ENCODE measurements at regions of chr1 and their contacts with region 1.

Region 1: DNA sequence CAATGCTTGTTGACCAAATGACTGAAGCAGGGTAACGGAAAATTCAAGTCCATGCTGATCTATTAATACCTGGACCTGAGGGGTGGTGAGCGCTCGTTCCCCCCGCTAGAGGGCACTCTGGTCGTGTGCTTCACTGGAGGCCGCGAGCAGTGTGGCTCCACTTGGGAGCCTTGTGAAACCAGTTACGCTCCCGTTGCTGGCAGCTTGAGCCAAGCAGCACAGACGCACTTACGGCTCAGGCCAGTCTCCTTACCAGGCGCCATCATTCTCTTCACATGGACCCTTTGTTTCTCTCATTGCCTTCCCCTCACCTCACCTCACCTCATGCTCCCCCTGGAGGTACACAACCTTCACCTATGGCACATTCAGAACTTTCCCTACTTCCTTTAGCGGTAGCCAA is 49.7 kb upstream of the TSPAN2 start:
- DNase-seq: peak; percentile 51
- H3K4me3 ChIP-seq: no peak overlapping the region
- H3K27me3 ChIP-seq: no peaks in the 10 kb centered on the region
- CTCF ChIP-seq: peak; percentile 92

Region 2: GRCh38 chr1:115041654-115042053 is 97.3 kb before region 1 on chr1:
- CTCF ChIA-PET with region 1: no interaction called
- POLR2A ChIA-PET with region 1: no interaction called
- DNase-seq: no peak
- H3K4me3 ChIP-seq: no peak overlapping the region
- H3K27me3 ChIP-seq: no peaks in the 10 kb centered on the region; the same call in 1 of the 2 replicates
- CTCF ChIP-seq: peak; percentile 23; the same call in 1 of the 2 replicates

Region 3: DNA sequence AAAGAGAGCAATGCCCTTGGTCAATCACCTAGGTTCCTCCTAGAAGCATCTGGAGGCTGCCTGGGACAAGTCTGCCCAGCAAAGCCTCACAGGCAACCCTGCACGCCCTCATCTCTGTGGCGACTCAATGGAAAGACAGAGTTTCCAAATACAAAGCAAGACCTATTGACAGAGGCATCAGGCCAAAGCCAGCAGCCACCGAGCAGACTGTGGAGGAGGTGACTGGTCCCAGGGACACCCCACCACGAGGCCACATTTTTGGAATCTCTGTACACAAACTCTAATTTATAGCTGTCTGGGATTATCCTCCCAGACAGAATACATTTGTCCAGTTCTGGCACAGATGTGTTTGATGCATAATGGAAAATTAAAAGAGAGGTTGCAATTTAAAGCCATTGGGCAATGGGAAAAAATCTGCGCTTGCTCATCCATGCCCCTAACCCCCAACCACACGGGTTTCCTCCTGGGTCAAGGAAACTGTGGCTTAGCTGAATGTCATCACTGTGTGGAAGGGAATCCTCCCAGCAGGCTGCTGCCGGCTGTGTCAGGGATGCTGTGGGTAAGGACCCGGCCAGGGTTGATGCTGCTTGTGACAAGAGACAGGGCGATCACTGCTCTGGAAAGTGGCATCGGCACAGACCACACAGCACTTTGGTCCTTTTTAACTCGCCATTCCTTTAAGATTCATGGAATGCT is 64.0 kb before region 1 on chr1:
- CTCF ChIA-PET with region 1: no interaction called
- POLR2A ChIA-PET with region 1: no interaction called
- DNase-seq: no peak
- H3K4me3 ChIP-seq: no peak overlapping the region
- H3K27me3 ChIP-seq: 0 out of 2 replicates have a peak, but pooled peaks cover 4% of the 10 kb centered on the region
- CTCF ChIP-seq: no peak

Region 4: GRCh38 chr1:115179397-115179835 is 40.4 kb after region 1 on chr1:
- CTCF ChIA-PET with region 1: interaction called, 16 read pairs
- POLR2A ChIA-PET with region 1: no interaction called
- DNase-seq: peak; percentile 92
- H3K4me3 ChIP-seq: no peak overlapping the region
- H3K27me3 ChIP-seq: no peaks in the 10 kb centered on the region
- CTCF ChIP-seq: no peak

Region 5: GRCh38 chr1:115302390-115302961 is 163.5 kb after region 1 on chr1:
- CTCF ChIA-PET with region 1: interaction called, 24 read pairs
- POLR2A ChIA-PET with region 1: interaction called, 4 read pairs
- DNase-seq: peak; percentile 91
- H3K4me3 ChIP-seq: no peak overlapping the region
- H3K27me3 ChIP-seq: no peaks in the 10 kb centered on the region
- CTCF ChIP-seq: no peak

Region 6: DNA sequence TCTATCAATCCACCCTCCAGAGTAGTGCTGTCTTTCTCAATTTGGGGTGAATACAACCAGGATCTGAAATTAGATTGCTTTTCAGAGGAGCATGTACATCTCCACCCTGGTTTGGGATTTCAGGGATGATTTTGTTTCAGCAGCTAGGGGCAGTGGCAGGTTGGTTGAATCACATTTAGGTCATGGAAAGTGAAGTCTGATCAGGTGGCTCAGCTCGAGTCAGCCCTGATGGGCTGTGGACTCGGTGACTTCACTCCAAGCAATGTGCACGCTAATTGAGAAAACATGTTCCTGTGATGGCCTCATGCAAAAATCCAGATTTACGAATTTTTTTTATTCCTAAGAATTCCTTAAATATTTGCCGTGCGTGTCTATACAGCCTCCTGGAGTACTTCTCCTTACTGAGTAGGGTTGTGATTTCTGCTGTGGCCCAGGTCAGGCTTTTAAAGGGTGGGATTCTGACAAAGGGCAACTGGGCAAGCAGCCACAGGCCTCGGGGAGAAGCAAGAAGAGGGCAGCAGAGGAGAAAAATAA is 191.6 kb after region 1 on chr1:
- CTCF ChIA-PET with region 1: interaction called, 11 read pairs
- POLR2A ChIA-PET with region 1: no interaction called
- DNase-seq: peak; percentile 95
- H3K4me3 ChIP-seq: no peak overlapping the region
- H3K27me3 ChIP-seq: no peaks in the 10 kb centered on the region
- CTCF ChIP-seq: peak; percentile 53

Region 7: GRCh38 chr1:115456441-115456961 is 317.5 kb after region 1 on chr1:
- CTCF ChIA-PET with region 1: interaction called, 10 read pairs
- POLR2A ChIA-PET with region 1: no interaction called
- DNase-seq: peak; percentile 30
- H3K4me3 ChIP-seq: no peak overlapping the region
- H3K27me3 ChIP-seq: no peaks in the 10 kb centered on the region
- CTCF ChIP-seq: no peak

Region 8: DNA sequence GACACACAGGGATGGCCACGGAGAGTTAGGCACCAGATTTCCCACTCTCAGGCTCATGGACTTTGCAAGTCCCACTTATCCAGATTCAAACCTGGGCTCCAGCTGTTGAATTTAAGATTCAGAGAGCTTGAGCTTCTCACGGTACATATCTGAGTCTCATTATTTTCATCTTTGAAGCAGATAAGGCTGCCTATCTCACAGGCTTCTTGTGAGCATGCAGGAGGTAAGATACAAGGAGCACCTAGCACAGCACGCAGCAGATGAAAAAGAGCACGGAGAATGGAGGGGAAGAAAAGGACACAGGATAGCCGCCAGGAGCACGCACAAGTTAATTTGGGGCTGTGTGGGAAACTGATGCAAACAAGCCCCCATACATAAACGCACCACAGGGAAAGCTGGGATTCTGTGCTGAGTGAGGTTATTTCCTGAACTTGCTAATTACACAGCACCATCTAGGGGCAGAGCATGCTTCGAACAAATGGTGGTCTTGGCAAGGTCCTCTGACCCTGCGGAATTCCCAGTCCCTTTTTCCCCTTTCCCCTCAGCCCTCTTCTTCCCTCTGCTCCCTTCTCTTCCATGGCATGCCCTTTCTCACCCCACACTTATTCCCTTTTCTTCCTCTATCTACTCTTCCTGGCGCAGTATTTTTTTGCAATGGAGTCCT is 368.1 kb after region 1 on chr1:
- CTCF ChIA-PET with region 1: interaction called, 12 read pairs
- POLR2A ChIA-PET with region 1: no interaction called
- DNase-seq: no peak
- H3K4me3 ChIP-seq: no peak overlapping the region
- H3K27me3 ChIP-seq: no peaks in the 10 kb centered on the region
- CTCF ChIP-seq: peak; percentile 71

Region 9: GRCh38 chr1:116492358-116492811 is 1353.4 kb after region 1 on chr1:
- CTCF ChIA-PET with region 1: no interaction called
- POLR2A ChIA-PET with region 1: interaction called, 18 read pairs
- DNase-seq: no peak
- H3K4me3 ChIP-seq: no peak overlapping the region
- H3K27me3 ChIP-seq: no peaks in the 10 kb centered on the region
- CTCF ChIP-seq: no peak

Measured in BJ (cell line).